ENCODE measurements at regions of chr2 and their contacts with region 1.

Region 1: GRCh38 chr2:54176577-54176976 is 61.2 kb downstream of the ACYP2 start:
- DNase-seq: peak; percentile 21
- H3K4me3 ChIP-seq: no peak overlapping the region
- H3K27ac ChIP-seq: no peak overlapping the region
- H3K27me3 ChIP-seq: no peaks in the 10 kb centered on the region
- CTCF ChIP-seq: peak; percentile 64

Region 2: DNA sequence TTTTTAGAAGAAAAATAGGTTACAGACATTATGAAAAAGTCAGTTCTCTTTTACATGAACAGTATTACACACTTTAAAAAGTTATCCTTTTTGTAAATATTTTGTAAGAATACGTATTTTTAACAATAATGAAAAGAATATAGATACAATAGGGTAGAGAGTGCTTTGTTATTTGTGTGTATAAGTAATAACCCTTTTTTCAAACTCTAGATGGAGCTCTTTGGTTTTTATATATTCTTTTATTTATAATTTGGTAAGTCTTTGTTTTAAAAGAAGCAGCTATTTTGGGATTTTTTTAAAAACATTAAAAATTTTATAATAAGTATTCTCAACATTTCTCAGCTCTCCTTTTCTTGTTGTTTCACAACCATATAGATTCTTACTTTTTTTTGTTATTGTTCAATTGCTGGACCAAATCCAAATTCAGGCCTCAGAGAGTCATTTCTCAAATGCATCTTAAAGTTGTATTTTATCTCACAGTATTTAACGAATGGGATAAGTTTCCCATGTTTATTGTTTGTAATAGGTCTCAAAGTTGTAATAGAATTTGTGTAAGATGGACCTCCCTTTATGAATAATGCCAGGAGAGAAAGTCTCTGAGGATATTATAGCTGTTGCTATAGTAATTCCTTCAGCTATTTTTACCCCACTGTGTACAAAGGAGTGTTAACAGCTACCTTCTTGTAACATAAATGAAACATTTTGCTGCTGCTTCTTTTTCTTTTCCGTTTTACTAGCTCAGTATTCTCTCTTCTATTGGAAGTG is 14.7 kb before region 1 on chr2:
- CTCF ChIA-PET with region 1: interaction called, 10 read pairs
- POLR2A ChIA-PET with region 1: no interaction called
- DNase-seq: no peak
- H3K4me3 ChIP-seq: no peak overlapping the region
- H3K27ac ChIP-seq: no peak overlapping the region
- H3K27me3 ChIP-seq: no peaks in the 10 kb centered on the region
- CTCF ChIP-seq: no peak; the same call in 1 of the 2 replicates